ENCODE measurements at regions of chr17 and their contacts with region 1.

Region 1: GRCh38 chr17:63984651-63985386 is 12.1 kb upstream of the SCN4A start:
- DNase-seq: peak; percentile 46 to 86 (median 70)
- H3K4me3 ChIP-seq: no peak overlapping the region
- H3K4me3 Mint-ChIP-seq: peak overlapping the region in 5 of 8 donors; percentile 10 to 86 (median 47)
- H3K27ac ChIP-seq: no peak overlapping the region
- H3K27ac Mint-ChIP-seq: peak overlapping the region; percentile 61 to 98 (median 87)
- H3K4me1 ChIP-seq: peaks cover 18% of the 10 kb centered on the region
- H3K4me1 Mint-ChIP-seq: peaks cover 16 to 29% (median 19%) of the 10 kb centered on the region in 4 donors
- H3K27me3 ChIP-seq: no peaks in the 10 kb centered on the region
- H3K27me3 Mint-ChIP-seq: peaks cover 0 to 2% of the 10 kb centered on the region in 2 donors

Region 2: GRCh38 chr17:63842540-63843386 is 142.1 kb before region 1 on chr17 and contains the start of gene SMARCD2:
- CTCF ChIA-PET with region 1: no interaction called
- POLR2A ChIA-PET with region 1: no interaction called
- intact Hi-C with region 1: no loop called
- DNase-seq: peak; percentile 97 to 98 (median 98)
- H3K4me3 ChIP-seq: peak within 1 kb of the TSS; percentile 58 to 72
- H3K4me3 Mint-ChIP-seq: peak within 1 kb of the TSS; percentile 86 to 97 (median 94)
- H3K27ac ChIP-seq: peak within 1 kb of the TSS; percentile 84
- H3K27ac Mint-ChIP-seq: peak within 1 kb of the TSS; percentile 87 to 96 (median 95)
- H3K4me1 ChIP-seq: peaks cover 48% of the 10 kb centered on the region
- H3K4me1 Mint-ChIP-seq: peaks cover 17 to 57% (median 35%) of the 10 kb centered on the region in 4 donors
- H3K27me3 ChIP-seq: no peaks in the 10 kb centered on the region
- H3K27me3 Mint-ChIP-seq: no peaks in the 10 kb centered on the region
- total RNA-seq, gene SMARCD2: 113 to 114 TPM

Region 3: DNA sequence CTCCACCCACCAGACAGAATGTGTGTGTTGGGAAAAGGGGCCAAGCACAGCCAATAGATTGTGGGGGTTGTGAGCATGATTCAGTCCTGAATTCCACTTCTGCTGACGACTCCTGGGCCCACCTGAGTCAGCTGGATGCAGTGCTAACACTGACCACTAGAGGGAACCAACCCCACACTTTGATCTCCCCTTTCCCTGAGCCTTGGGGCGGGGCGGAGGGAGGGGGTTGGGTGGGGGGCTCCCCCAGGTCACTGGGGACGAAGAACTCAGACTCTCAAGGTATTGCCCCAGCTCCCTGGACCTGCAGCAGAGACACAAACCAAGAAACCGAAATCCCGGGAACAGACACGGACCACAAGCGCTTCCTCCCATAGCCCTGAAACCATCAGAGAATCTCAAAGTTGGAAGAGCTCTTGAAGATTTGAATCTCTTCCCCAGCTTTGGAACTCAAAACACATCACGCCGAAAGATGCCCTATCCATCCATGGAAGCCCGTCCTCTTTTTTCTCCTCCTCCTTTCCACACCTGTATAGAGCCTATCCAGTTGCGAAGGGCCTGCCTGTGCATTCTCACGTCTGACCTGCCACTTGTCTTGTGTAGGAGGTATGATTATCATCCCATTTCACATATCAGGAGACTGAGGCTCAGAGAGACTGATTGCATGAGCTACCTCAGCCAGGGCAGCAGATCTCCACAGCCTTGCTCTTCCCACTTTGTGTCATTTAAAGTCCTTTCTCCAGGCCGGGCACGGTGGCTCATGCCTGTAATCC is 73.0 kb before region 1 on chr17:
- CTCF ChIA-PET with region 1: interaction called, 86 read pairs
- POLR2A ChIA-PET with region 1: no interaction called
- intact Hi-C with region 1: no loop called
- DNase-seq: peak; percentile 48 to 63 (median 52)
- H3K4me3 ChIP-seq: no peak overlapping the region
- H3K4me3 Mint-ChIP-seq: no peak overlapping the region
- H3K27ac ChIP-seq: no peak overlapping the region
- H3K27ac Mint-ChIP-seq: peak overlapping the region in 1 of 7 donors; percentile 87
- H3K4me1 ChIP-seq: no peaks in the 10 kb centered on the region
- H3K4me1 Mint-ChIP-seq: peaks cover 0 to 2% (median 0%) of the 10 kb centered on the region in 4 donors
- H3K27me3 ChIP-seq: no peaks in the 10 kb centered on the region
- H3K27me3 Mint-ChIP-seq: peaks cover 0 to 2% of the 10 kb centered on the region in 2 donors

Region 4: GRCh38 chr17:63966646-63967264 is 18.1 kb before region 1 on chr17:
- CTCF ChIA-PET with region 1: interaction called, 12 read pairs
- POLR2A ChIA-PET with region 1: interaction called, 4 read pairs
- intact Hi-C with region 1: no loop called
- DNase-seq: peak; percentile 28 to 61 (median 49)
- H3K4me3 ChIP-seq: no peak overlapping the region
- H3K4me3 Mint-ChIP-seq: peak overlapping the region in 1 of 8 donors; percentile 51
- H3K27ac ChIP-seq: no peak overlapping the region
- H3K27ac Mint-ChIP-seq: peak overlapping the region in 4 of 7 donors; percentile 2 to 49 (median 20)
- H3K4me1 ChIP-seq: peaks cover 12% of the 10 kb centered on the region
- H3K4me1 Mint-ChIP-seq: peaks cover 7 to 29% (median 8%) of the 10 kb centered on the region in 4 donors
- H3K27me3 ChIP-seq: no peaks in the 10 kb centered on the region
- H3K27me3 Mint-ChIP-seq: no peaks in the 10 kb centered on the region

Region 5: DNA sequence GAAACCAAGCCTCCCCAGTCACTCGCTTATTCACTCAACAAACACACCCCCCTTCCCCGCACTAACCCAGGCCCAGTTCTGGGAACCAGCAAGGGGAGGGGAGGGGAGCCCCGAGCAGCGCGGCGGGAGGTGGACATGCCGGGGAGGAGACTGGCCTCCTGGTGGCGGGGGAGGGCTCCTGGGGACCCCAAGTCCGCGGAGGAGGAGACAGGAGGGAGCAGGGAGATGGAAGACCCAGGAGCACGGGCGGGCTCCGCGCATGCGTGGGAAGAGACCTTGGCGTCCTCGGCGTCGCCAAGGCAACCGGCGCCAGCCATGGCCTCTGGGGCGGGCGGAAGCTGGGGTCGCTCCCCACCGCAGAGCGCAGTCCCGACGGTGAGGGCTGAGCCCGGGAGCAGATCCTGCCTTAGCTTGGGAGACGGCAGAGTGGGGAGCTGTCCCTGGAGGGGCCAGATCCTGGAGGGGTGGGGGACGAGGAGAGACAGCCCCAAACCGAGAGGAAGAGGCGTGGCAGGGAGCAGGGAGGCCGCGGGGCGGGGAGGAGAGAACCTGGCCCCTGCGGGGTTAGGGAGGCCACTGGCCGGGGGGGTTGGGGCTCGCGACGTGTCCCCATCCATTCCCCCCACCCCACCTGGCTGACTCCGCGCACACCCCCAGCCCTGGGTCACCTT is 13.4 kb after region 1 on chr17 and contains the start of gene PRR29:
- CTCF ChIA-PET with region 1: interaction called, 23 read pairs
- POLR2A ChIA-PET with region 1: interaction called, 14 read pairs
- intact Hi-C with region 1: no loop called
- DNase-seq: peak; percentile 70 to 81 (median 75)
- H3K4me3 ChIP-seq: peak within 1 kb of the TSS; percentile 5 to 76
- H3K4me3 Mint-ChIP-seq: peak within 1 kb of the TSS; percentile 87 to 94 (median 88)
- H3K27ac ChIP-seq: peak within 1 kb of the TSS; percentile 39
- H3K27ac Mint-ChIP-seq: peak within 1 kb of the TSS; percentile 60 to 91 (median 87)
- H3K4me1 ChIP-seq: peaks cover 46% of the 10 kb centered on the region
- H3K4me1 Mint-ChIP-seq: peaks cover 32 to 69% (median 42%) of the 10 kb centered on the region in 4 donors
- H3K27me3 ChIP-seq: no peaks in the 10 kb centered on the region
- H3K27me3 Mint-ChIP-seq: no peaks in the 10 kb centered on the region
- total RNA-seq, gene PRR29: 0.19 to 1.0 TPM

Region 6: DNA sequence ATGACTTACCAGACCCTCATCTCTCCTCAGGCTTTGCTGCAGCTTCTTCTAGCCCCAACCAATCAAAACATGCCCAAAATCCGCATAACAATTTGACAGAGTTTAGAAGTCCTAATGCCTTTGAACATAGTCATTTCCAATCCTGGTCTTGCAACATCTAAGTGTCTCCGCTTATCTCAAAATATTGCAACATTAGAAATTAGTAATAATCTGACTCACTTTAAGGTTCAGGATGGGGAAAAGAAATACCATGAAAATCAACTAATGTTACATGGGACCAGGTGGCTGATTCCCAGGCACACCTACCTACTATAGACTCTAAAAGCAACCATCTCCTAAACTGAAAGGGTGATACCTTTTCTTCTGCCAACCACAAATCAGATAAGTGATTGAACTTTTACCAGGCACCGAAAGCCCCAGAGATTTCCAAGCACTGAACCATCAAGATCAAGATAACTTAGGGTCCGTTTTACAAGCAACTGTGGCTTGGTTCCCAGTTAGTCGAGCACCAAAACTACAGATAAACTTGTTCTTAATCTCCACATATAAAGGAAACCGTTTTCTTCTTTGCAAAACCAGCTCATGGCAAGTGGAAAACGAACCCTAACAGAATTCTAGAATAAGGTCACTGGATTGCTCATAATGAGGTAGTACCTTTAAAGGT is 131.2 kb after region 1 on chr17:
- CTCF ChIA-PET with region 1: no interaction called
- POLR2A ChIA-PET with region 1: no interaction called
- intact Hi-C with region 1: no loop called
- DNase-seq: peak in 2 of 5 donors; percentile 28 to 56
- H3K4me3 ChIP-seq: peak overlapping the region in 1 of 2 donors; percentile 6
- H3K4me3 Mint-ChIP-seq: peak overlapping the region; percentile 29 to 84 (median 62)
- H3K27ac ChIP-seq: no peak overlapping the region
- H3K27ac Mint-ChIP-seq: peak overlapping the region; percentile 5 to 86 (median 66)
- H3K4me1 ChIP-seq: peaks cover 74% of the 10 kb centered on the region
- H3K4me1 Mint-ChIP-seq: peaks cover 48 to 88% (median 66%) of the 10 kb centered on the region in 4 donors
- H3K27me3 ChIP-seq: no peaks in the 10 kb centered on the region
- H3K27me3 Mint-ChIP-seq: no peaks in the 10 kb centered on the region

Region 7: DNA sequence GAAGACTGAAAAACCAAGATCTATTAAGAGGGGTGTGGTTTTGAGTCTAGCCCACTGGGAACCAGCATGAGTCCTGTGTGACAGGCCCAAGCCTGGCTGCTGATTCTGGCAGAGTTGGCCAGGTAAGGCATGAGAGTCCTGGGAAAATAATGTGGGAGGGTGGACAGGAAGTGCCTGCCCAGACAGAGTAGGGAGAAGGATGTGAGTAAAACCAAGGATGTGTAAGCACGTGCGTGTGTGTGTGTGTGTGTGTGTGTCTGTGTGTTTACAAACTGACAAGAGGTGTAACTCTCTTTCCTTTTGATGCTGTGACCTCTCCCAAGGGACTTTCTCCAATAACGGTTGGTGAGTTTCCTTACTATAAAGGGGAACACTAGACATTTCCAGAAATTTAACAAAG is 293.8 kb after region 1 on chr17:
- CTCF ChIA-PET with region 1: no interaction called
- POLR2A ChIA-PET with region 1: no interaction called
- intact Hi-C with region 1: no loop called
- DNase-seq: no peak
- H3K4me3 ChIP-seq: no peak overlapping the region
- H3K4me3 Mint-ChIP-seq: no peak overlapping the region
- H3K27ac ChIP-seq: no peak overlapping the region
- H3K27ac Mint-ChIP-seq: peak overlapping the region in 1 of 7 donors; percentile 26
- H3K4me1 ChIP-seq: no peaks in the 10 kb centered on the region
- H3K4me1 Mint-ChIP-seq: peaks cover 0 to 2% (median 0%) of the 10 kb centered on the region in 4 donors
- H3K27me3 ChIP-seq: no peaks in the 10 kb centered on the region
- H3K27me3 Mint-ChIP-seq: no peaks in the 10 kb centered on the region

Measured in CD4-positive, alpha-beta memory T cell (primary cell).